ENCODE measurements at regions of chr15 and their contacts with region 1.

Region 1: DNA sequence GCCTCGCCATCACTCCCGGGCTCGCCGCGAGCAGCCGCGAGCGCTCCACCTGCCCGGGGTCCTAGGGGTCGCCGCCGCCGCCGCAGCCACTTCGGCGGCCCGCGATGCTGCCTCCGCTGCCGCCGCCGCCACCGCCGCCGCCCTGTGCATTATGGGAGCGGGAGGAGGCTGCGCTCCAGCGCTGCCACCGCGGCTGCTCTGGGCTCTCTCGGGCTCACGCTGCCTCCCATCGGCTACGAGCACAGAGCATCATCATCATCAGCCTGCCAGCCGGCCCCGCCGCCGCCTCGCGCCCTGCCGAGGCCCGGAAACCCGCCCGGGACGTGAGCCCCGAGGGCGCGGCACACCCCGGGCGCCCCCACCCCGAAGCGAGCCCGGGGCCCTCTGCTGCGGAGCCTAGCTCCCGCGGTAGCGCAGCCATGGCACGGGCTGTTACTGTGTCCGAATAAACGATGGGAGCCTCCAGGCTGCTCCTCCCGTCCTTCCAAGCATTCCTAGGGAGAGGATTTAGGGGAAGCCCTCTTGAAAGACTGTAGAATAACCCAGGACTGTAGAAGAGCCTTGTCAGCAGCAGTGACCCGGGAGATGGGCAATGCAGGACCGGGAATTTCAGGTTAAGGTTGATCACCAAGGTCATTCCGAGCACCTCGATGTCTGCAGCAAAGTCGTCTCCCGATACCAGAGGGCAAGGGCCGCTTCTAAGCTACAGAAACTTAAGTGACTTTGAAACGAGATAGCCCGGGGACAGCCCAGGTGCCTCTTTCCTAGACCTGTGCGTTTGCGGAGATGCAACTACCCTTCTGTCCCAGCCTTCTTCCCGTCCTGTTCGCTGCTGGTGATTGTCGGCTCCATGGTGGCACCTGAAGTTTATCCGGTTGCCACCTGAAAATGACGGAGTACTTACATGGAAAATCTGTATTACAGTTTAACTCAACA is 579 bp upstream of the MYO5A start:
- DNase-seq: peak; percentile 71
- ATAC-seq: peak; percentile 87
- H3K4me3 ChIP-seq: peak overlapping the region; percentile 75
- H3K27ac ChIP-seq: peak overlapping the region; percentile 25
- H3K4me1 ChIP-seq: 0 out of 2 replicates have a peak, but pooled peaks cover 3% of the 10 kb centered on the region
- H3K27me3 ChIP-seq: peaks cover 8% of the 10 kb centered on the region
- CTCF ChIP-seq: 0 out of 2 replicates have a peak, but pooled peaks have one; percentile 15
- POLR2A ChIP-seq: no peak
- RAD21 ChIP-seq: peak; percentile 40

Region 2: GRCh38 chr15:52256366-52256765 is 272.9 kb before region 1 on chr15:
- CTCF ChIA-PET with region 1: no interaction called
- POLR2A ChIA-PET with region 1: no interaction called
- dilution Hi-C with region 1: no loop called
- in situ Hi-C with region 1: no loop called
- intact Hi-C with region 1: loop called (anchors 2 kb)
- DNase-seq: peak; percentile 80
- ATAC-seq: peak; percentile 64
- H3K4me3 ChIP-seq: no peak overlapping the region; the same call in 1 of the 2 replicates
- H3K27ac ChIP-seq: no peak overlapping the region
- H3K4me1 ChIP-seq: peaks cover 10% of the 10 kb centered on the region
- H3K27me3 ChIP-seq: no peaks in the 10 kb centered on the region
- CTCF ChIP-seq: peak; percentile 82
- POLR2A ChIP-seq: no peak
- RAD21 ChIP-seq: peak; percentile 91

Region 3: DNA sequence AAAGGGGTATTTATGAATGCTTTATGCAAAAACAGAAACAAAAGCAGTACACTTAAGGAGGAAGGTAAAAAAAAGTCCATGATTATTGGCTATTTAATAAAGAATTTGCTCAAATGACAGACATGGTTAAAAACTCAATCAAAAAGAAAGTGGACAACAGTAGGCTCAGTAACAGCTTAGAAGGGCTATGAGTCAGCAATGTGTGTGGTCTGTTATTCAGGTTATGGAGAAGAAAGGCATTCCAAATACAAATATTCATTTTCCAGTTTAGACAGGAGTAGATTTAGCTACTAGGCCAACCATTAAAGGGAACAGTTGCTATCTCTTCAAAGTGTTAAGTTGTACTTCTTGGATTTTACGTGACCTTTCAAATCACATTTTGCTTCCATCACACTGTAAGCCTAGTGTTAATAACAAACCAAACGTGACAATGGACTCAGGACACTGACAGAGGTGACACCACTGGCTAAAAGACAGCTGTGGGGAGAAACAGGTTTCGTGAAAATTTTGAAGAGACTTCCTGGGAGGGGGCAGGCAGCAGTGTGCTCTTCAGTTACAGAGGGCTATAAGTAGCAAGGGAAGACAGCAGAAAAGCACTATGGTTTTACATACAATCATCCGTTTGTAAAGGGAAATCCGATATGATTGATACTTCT is 191.9 kb before region 1 on chr15:
- CTCF ChIA-PET with region 1: no interaction called
- POLR2A ChIA-PET with region 1: no interaction called
- dilution Hi-C with region 1: no loop called
- in situ Hi-C with region 1: no loop called
- intact Hi-C with region 1: loop called (anchors 5 kb)
- DNase-seq: peak; percentile 77
- ATAC-seq: peak; percentile 71
- H3K4me3 ChIP-seq: no peak overlapping the region
- H3K27ac ChIP-seq: no peak overlapping the region
- H3K4me1 ChIP-seq: peaks cover 7% of the 10 kb centered on the region; the same call in 1 of the 2 replicates
- H3K27me3 ChIP-seq: no peaks in the 10 kb centered on the region
- CTCF ChIP-seq: no peak
- POLR2A ChIP-seq: no peak
- RAD21 ChIP-seq: no peak

Measured in IMR-90 (cell line).